ENCODE measurements at regions of chr2 and their contacts with region 1.

Region 1: GRCh38 chr2:120680136-120680761 is 55.4 kb upstream of the GLI2 start:
- DNase-seq: peak; percentile 90
- H3K4me3 ChIP-seq: no peak overlapping the region
- H3K27ac ChIP-seq: no peak overlapping the region
- H3K4me1 ChIP-seq: peaks cover 0 to 6% (median 3%) of the 10 kb centered on the region in 6 donors
- H3K27me3 ChIP-seq: peaks cover 0 to 88% (median 19%) of the 10 kb centered on the region in 7 donors
- CTCF ChIP-seq: peak in 10 of 11 experiments; percentile 17 to 87 (median 58)
- POLR2A ChIP-seq: no peak

Region 2: GRCh38 chr2:119638685-119639554 is 1041.3 kb before region 1 on chr2:
- intact Hi-C with region 1: loop called (anchors 10 kb)
- DNase-seq: no peak
- H3K4me3 ChIP-seq: no peak overlapping the region
- H3K27ac ChIP-seq: no peak overlapping the region
- H3K4me1 ChIP-seq: peaks cover 0 to 10% (median 6%) of the 10 kb centered on the region in 6 donors
- H3K27me3 ChIP-seq: peaks cover 0 to 7% (median 0%) of the 10 kb centered on the region in 7 donors
- CTCF ChIP-seq: no peak
- POLR2A ChIP-seq: no peak

Region 3: GRCh38 chr2:120109186-120110061 is 570.8 kb before region 1 on chr2:
- intact Hi-C with region 1: loop called (anchors 5 kb)
- DNase-seq: no peak
- H3K4me3 ChIP-seq: peak overlapping the region in 1 of 8 donors; percentile 39
- H3K27ac ChIP-seq: peak overlapping the region in 7 of 8 donors; percentile 35 to 83 (median 66)
- H3K4me1 ChIP-seq: peaks cover 13 to 37% (median 24%) of the 10 kb centered on the region in 6 donors
- H3K27me3 ChIP-seq: no peaks in the 10 kb centered on the region
- CTCF ChIP-seq: peak in 9 of 11 experiments; percentile 19 to 60 (median 42)
- POLR2A ChIP-seq: no peak

Region 4: DNA sequence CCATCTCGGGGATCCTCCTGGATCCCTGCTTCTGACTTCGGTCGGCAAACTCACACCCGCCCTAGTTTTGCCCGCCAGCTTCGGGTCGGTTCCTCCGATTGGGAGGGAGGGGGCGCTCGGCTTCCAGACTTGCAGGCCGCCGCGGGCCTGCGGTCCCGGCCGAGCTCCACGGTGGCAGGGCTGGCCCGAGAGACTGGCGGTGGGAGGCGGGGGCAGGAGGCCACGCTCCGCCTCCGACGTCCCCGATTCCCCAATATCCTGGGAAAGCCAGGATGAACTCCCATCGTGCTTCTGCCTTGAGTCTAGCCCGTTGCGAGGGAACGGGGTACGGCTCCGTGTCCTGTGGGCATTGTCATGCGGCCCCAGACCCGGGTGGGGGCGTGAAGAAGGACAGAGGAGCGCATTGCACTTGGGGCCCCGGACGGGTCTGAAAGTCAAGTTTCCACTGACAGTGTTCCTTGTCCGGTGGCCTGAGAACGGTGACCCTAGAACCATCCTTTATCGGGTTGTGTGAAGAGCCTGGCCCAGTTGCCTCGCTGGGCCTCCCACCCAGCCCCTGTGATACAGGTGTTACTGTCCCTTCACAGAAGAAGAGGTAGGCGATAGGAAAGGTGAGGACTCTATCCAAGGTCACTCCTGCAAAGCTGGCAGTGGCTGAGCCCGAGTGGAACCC is 336.7 kb before region 1 on chr2:
- intact Hi-C with region 1: loop called (anchors 5 kb)
- DNase-seq: peak; percentile 94
- H3K4me3 ChIP-seq: peak overlapping the region in 5 of 8 donors; percentile 3 to 80 (median 9)
- H3K27ac ChIP-seq: no peak overlapping the region
- H3K4me1 ChIP-seq: peaks cover 28 to 72% (median 50%) of the 10 kb centered on the region in 6 donors
- H3K27me3 ChIP-seq: peaks cover 3 to 99% (median 82%) of the 10 kb centered on the region in 7 donors
- CTCF ChIP-seq: peak; percentile 36 to 88 (median 73)
- POLR2A ChIP-seq: no peak

Measured in spleen (tissue), 13 donors.